ENCODE measurements at regions of chr3 and their contacts with region 1.

Region 1: GRCh38 chr3:132253262-132253878 is 63.8 kb upstream of the ACP3 start:
- DNase-seq: peak; percentile 53
- H3K4me3 ChIP-seq: no peak overlapping the region
- H3K27ac ChIP-seq: peak overlapping the region; percentile 71 to 73
- H3K4me1 ChIP-seq: peaks cover 8% of the 10 kb centered on the region
- H3K27me3 ChIP-seq: no peaks in the 10 kb centered on the region
- CTCF ChIP-seq: peak; percentile 45 to 82 (median 68)
- POLR2A ChIP-seq: no peak

Region 2: GRCh38 chr3:131658108-131658507 is 595.3 kb before region 1 on chr3:
- intact Hi-C with region 1: no loop called
- DNase-seq: no peak
- H3K4me3 ChIP-seq: no peak overlapping the region
- H3K27ac ChIP-seq: no peak overlapping the region
- H3K4me1 ChIP-seq: no peaks in the 10 kb centered on the region
- H3K27me3 ChIP-seq: no peaks in the 10 kb centered on the region
- CTCF ChIP-seq: no peak
- POLR2A ChIP-seq: no peak

Region 3: DNA sequence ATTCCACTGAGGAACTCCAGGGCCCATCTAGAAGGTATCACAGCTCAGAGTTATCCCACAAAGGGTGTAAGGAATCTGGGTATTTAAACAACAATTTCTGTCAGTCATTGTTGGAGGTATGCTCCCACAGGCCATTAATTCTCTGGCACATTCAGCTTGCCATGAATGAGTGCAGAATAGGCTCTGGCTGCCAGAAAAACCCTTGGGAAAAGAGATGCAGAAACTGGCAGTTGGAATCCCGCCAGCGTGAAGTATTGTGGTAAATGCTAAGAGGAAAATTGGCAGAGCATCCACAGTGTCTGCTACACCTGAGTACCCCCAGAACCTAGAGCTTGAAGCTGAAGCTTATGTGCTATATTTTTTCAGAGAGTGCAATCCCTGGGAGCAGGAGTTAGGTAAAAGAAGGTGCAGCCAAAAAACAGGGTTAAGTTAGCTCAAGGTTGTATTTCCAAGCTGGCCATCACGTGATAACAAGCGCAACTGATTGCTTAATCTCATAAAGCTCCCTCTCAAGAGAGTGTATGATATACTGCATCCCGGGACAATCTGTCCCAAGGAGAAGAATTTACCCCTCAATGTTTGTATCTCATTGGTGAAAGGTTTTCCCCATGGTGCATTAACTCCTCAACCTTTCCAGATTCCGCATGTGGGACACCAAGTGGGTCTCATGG is 30.4 kb before region 1 on chr3:
- intact Hi-C with region 1: no loop called
- DNase-seq: no peak
- H3K4me3 ChIP-seq: no peak overlapping the region
- H3K27ac ChIP-seq: peak overlapping the region; percentile 72 to 91
- H3K4me1 ChIP-seq: peaks cover 5% of the 10 kb centered on the region
- H3K27me3 ChIP-seq: no peaks in the 10 kb centered on the region
- CTCF ChIP-seq: no peak
- POLR2A ChIP-seq: no peak

Region 4: GRCh38 chr3:132317229-132317948 is 64.0 kb after region 1 on chr3 and contains the start of gene ACP3:
- intact Hi-C with region 1: no loop called
- DNase-seq: peak; percentile 69
- H3K4me3 ChIP-seq: peak within 1 kb of the TSS; percentile 30 to 39
- H3K27ac ChIP-seq: peak within 1 kb of the TSS; percentile 89 to 90
- H3K4me1 ChIP-seq: no peaks in the 10 kb centered on the region
- H3K27me3 ChIP-seq: no peaks in the 10 kb centered on the region
- CTCF ChIP-seq: peak in 2 of 4 experiments; percentile 11 to 22
- POLR2A ChIP-seq: peak; percentile 12
- total RNA-seq, gene ACP3: 1,778 to 14,359 TPM

Region 5: GRCh38 chr3:132343018-132343612 is 89.7 kb after region 1 on chr3:
- intact Hi-C with region 1: loop called (anchors 2 kb)
- DNase-seq: peak; percentile 52
- H3K4me3 ChIP-seq: no peak overlapping the region
- H3K27ac ChIP-seq: peak overlapping the region; percentile 56 to 74
- H3K4me1 ChIP-seq: no peaks in the 10 kb centered on the region
- H3K27me3 ChIP-seq: no peaks in the 10 kb centered on the region
- CTCF ChIP-seq: peak; percentile 30 to 88 (median 78)
- POLR2A ChIP-seq: no peak

Region 6: GRCh38 chr3:132659365-132660051 is 406.1 kb after region 1 on chr3 and contains the start of gene ACAD11:
- intact Hi-C with region 1: no loop called
- DNase-seq: peak; percentile 69
- H3K4me3 ChIP-seq: peak within 1 kb of the TSS; percentile 75 to 77
- H3K27ac ChIP-seq: peak within 1 kb of the TSS; percentile 89 to 91
- H3K4me1 ChIP-seq: peaks cover 7% of the 10 kb centered on the region
- H3K27me3 ChIP-seq: no peaks in the 10 kb centered on the region
- CTCF ChIP-seq: peak; percentile 21 to 67 (median 48)
- POLR2A ChIP-seq: peak; percentile 51
- total RNA-seq, gene ACAD11: 13.8 to 22.7 TPM

Measured in prostate gland (tissue), 2 donors.